Naive thymus-derived CD4-positive, alpha-beta T cell (primary cell): ENCODE measurements at regions of chr9 and their contacts with region 1.

Region 1: DNA sequence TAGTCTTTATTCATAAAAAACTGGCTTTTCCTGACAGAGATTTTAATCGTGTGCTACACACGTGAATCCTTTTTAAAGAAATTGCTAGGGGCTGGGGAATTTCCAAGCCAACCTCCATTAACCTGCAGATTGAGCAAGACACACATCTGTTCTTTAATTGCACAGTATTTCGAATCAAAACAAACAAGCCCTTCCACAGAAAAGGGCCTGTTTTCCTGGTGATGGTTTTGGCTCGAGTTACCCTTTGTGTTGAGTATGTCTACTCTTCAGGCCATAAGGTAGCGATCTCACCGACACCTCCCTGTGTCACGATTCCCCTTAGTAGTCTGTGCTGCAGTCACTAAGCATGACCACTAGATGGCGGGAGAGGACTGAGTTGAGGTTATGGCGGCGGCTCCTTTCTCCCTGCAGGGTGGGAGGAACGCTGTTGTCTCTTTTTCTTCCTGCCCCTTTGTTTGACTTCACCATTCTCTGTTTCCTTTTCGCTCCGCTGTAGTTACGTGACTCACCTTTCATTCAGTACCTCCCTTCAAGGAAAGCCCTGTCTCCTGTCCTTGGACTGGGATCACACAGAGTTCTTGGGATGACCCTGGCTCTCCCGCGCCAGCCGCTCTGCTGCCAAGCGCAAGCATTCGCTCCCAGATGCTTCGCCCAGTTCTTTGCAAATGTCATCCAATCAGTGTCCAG is 137.1 kb upstream of the SLC24A2 start:
- DNase-seq: peak; percentile 54 to 87 (median 82)
- ATAC-seq: peak; percentile 99
- H3K4me3 ChIP-seq: peak overlapping the region; percentile 42
- H3K4me3 Mint-ChIP-seq: peak overlapping the region; percentile 69 to 84 (median 79)
- H3K27ac ChIP-seq: no peak overlapping the region
- H3K27ac Mint-ChIP-seq: peak overlapping the region in 7 of 9 donors; percentile 23 to 53 (median 35)
- H3K4me1 ChIP-seq: peaks cover 0 to 7% of the 10 kb centered on the region in 2 donors
- H3K4me1 Mint-ChIP-seq: peaks cover 0 to 39% (median 8%) of the 10 kb centered on the region in 7 donors
- H3K27me3 ChIP-seq: no peaks in the 10 kb centered on the region
- H3K27me3 Mint-ChIP-seq: peaks cover 0 to 14% (median 3%) of the 10 kb centered on the region in 5 donors

Region 2: DNA sequence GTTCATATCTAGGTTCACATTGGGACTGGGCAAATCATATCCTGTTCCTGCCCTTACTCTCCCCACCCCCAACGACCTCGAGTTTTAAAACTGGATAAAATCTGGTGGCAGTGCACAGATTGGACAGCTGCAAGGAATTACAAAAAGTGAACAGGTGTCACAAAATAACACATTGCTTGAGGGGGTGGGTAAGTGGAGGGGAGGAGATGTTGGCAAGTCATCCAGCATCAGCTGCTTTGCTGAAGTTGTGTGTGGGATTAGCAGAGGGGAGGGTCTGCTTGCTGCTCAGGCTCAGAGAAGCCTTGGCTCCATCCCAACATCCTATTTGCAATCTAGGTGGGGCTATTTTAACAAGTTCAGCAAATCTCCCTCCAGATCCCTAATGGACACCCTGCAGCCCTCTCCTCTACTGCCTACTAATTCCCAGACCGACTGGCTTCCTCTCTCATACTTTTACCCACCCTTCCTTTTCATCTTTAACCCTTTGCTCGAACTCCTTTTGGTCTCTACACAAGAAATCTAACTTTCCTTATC is 97.3 kb before region 1 on chr9:
- CTCF ChIA-PET with region 1: no interaction called
- POLR2A ChIA-PET with region 1: no interaction called
- intact Hi-C with region 1: no loop called
- DNase-seq: no peak
- ATAC-seq: no peak
- H3K4me3 ChIP-seq: no peak overlapping the region
- H3K4me3 Mint-ChIP-seq: no peak overlapping the region
- H3K27ac ChIP-seq: no peak overlapping the region
- H3K27ac Mint-ChIP-seq: no peak overlapping the region
- H3K4me1 ChIP-seq: no peaks in the 10 kb centered on the region
- H3K4me1 Mint-ChIP-seq: no peaks in the 10 kb centered on the region
- H3K27me3 ChIP-seq: no peaks in the 10 kb centered on the region
- H3K27me3 Mint-ChIP-seq: peaks cover 0 to 33% (median 12%) of the 10 kb centered on the region in 5 donors

Region 3: GRCh38 chr9:20043035-20043434 is 117.1 kb after region 1 on chr9:
- CTCF ChIA-PET with region 1: no interaction called
- POLR2A ChIA-PET with region 1: no interaction called
- intact Hi-C with region 1: loop called in 1 of 2 experiments (anchors 5 kb)
- DNase-seq: peak in 6 of 9 donors; percentile 6 to 46 (median 34)
- ATAC-seq: peak; percentile 59
- H3K4me3 ChIP-seq: peak overlapping the region; percentile 28
- H3K4me3 Mint-ChIP-seq: peak overlapping the region; percentile 61 to 85 (median 80)
- H3K27ac ChIP-seq: peak overlapping the region; percentile 17
- H3K27ac Mint-ChIP-seq: peak overlapping the region; percentile 84 to 95 (median 91)
- H3K4me1 ChIP-seq: peaks cover 0 to 12% of the 10 kb centered on the region in 2 donors
- H3K4me1 Mint-ChIP-seq: peaks cover 9 to 43% (median 27%) of the 10 kb centered on the region in 7 donors
- H3K27me3 ChIP-seq: no peaks in the 10 kb centered on the region
- H3K27me3 Mint-ChIP-seq: no peaks in the 10 kb centered on the region

Region 4: GRCh38 chr9:20319641-20320337 is 393.8 kb after region 1 on chr9:
- CTCF ChIA-PET with region 1: no interaction called
- POLR2A ChIA-PET with region 1: no interaction called
- intact Hi-C with region 1: loop called in 1 of 2 experiments (anchors 5 kb)
- DNase-seq: peak in 1 of 9 donors; percentile 33
- ATAC-seq: no peak
- H3K4me3 ChIP-seq: no peak overlapping the region
- H3K4me3 Mint-ChIP-seq: peak overlapping the region in 9 of 10 donors; percentile 5 to 89 (median 33)
- H3K27ac ChIP-seq: no peak overlapping the region
- H3K27ac Mint-ChIP-seq: peak overlapping the region; percentile 62 to 99 (median 92)
- H3K4me1 ChIP-seq: peaks cover 44 to 95% of the 10 kb centered on the region in 2 donors
- H3K4me1 Mint-ChIP-seq: peaks cover 53 to 100% (median 96%) of the 10 kb centered on the region in 7 donors
- H3K27me3 ChIP-seq: no peaks in the 10 kb centered on the region
- H3K27me3 Mint-ChIP-seq: peaks cover 0 to 2% (median 0%) of the 10 kb centered on the region in 5 donors

Region 5: GRCh38 chr9:20361656-20362570 is 436.0 kb after region 1 on chr9:
- CTCF ChIA-PET with region 1: interaction called, 3 read pairs
- POLR2A ChIA-PET with region 1: no interaction called
- intact Hi-C with region 1: loop called in 1 of 2 experiments (anchors 2 kb)
- DNase-seq: peak in 2 of 9 donors; percentile 18 to 23
- ATAC-seq: peak; percentile 58
- H3K4me3 ChIP-seq: no peak overlapping the region
- H3K4me3 Mint-ChIP-seq: peak overlapping the region; percentile 11 to 76 (median 67)
- H3K27ac ChIP-seq: peak overlapping the region; percentile 45
- H3K27ac Mint-ChIP-seq: peak overlapping the region; percentile 65 to 94 (median 86)
- H3K4me1 ChIP-seq: peaks cover 0 to 31% of the 10 kb centered on the region in 2 donors
- H3K4me1 Mint-ChIP-seq: peaks cover 28 to 91% (median 65%) of the 10 kb centered on the region in 7 donors
- H3K27me3 ChIP-seq: no peaks in the 10 kb centered on the region
- H3K27me3 Mint-ChIP-seq: no peaks in the 10 kb centered on the region

Region 6: DNA sequence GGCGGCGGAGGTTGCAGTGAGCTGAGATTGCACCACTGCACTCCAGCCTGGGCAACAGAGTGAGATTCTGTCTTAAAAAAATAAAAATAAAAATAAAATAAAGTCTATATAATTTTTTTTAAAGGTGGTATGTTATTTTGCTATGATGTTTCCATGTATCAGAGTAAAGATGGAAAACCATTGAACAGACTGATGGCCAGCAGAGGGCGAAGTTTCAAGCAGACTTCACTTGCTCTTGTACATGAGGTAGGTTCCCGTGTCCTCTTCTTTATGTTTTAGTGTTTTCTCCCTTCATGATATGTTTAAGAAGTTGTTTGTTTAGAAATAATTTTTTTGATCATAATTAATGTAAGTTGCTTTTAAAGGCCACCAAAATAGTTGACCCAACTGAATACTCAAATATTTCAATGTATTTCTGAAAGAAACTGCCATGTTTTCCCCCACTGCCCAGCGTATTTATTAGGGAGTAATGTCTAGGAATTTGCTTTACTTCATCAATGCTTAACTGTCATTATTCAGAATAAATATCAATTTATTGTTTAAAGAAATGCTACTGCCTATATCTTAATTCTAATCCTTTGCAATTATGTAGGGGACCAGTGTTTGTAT is 959.1 kb after region 1 on chr9:
- CTCF ChIA-PET with region 1: interaction called, 4 read pairs
- POLR2A ChIA-PET with region 1: no interaction called
- intact Hi-C with region 1: loop called in 1 of 2 experiments (anchors 1 kb)
- DNase-seq: peak in 8 of 9 donors; percentile 23 to 54 (median 43)
- ATAC-seq: peak; percentile 71
- H3K4me3 ChIP-seq: no peak overlapping the region
- H3K4me3 Mint-ChIP-seq: no peak overlapping the region
- H3K27ac ChIP-seq: no peak overlapping the region
- H3K27ac Mint-ChIP-seq: no peak overlapping the region
- H3K4me1 ChIP-seq: no peaks in the 10 kb centered on the region
- H3K4me1 Mint-ChIP-seq: no peaks in the 10 kb centered on the region
- H3K27me3 ChIP-seq: no peaks in the 10 kb centered on the region
- H3K27me3 Mint-ChIP-seq: no peaks in the 10 kb centered on the region

Region 7: DNA sequence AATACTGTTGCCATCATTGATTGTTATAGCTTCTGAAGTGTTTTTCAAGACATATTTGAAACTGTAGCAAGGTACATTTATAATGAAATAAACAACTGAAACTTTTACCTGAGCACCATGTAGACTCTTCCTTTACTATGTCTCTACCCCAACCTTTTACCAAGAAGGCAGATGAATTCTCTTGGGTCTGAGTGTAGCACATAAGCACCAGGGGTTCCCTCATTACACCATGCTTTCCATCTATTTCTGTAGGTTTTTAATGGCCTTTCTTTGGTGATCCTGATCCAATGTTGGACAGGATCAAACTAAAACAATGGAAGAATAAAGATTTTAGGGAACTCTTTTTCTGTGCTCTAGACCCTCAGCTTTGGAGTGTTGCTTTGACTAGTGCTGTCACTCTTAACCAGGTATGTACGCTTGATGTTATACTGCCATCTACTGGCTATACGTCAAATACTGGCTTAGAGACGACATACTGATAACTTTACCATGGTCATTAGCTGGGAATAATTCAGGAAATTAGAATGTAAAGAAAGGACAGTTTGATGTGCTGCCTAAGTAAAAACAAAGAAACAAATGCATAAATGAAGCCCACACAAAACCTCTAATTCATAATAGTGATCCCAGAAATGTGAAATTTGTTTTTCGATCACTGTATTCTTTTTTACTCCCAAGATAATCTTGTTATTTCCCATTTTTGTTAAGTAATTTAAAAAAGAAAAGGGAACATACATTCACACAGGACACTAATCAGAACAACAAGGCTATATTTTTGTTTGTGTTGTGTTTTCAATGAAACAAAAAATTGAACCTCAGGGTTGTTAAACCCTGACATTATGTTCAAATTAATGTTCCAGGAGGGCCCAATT is 1185.0 kb after region 1 on chr9:
- CTCF ChIA-PET with region 1: interaction called, 21 read pairs
- POLR2A ChIA-PET with region 1: no interaction called
- intact Hi-C with region 1: loop called (anchors 1 kb)
- DNase-seq: peak in 7 of 9 donors; percentile 43 to 72 (median 62)
- ATAC-seq: peak; percentile 92
- H3K4me3 ChIP-seq: no peak overlapping the region
- H3K4me3 Mint-ChIP-seq: no peak overlapping the region
- H3K27ac ChIP-seq: no peak overlapping the region
- H3K27ac Mint-ChIP-seq: peak overlapping the region in 1 of 9 donors; percentile 51
- H3K4me1 ChIP-seq: no peaks in the 10 kb centered on the region
- H3K4me1 Mint-ChIP-seq: peaks cover 0 to 3% (median 0%) of the 10 kb centered on the region in 7 donors
- H3K27me3 ChIP-seq: no peaks in the 10 kb centered on the region
- H3K27me3 Mint-ChIP-seq: peaks cover 0 to 19% (median 0%) of the 10 kb centered on the region in 5 donors